Panc1 (cell line): ENCODE measurements at regions of chr3 and their contacts with region 1.

Region 1: DNA sequence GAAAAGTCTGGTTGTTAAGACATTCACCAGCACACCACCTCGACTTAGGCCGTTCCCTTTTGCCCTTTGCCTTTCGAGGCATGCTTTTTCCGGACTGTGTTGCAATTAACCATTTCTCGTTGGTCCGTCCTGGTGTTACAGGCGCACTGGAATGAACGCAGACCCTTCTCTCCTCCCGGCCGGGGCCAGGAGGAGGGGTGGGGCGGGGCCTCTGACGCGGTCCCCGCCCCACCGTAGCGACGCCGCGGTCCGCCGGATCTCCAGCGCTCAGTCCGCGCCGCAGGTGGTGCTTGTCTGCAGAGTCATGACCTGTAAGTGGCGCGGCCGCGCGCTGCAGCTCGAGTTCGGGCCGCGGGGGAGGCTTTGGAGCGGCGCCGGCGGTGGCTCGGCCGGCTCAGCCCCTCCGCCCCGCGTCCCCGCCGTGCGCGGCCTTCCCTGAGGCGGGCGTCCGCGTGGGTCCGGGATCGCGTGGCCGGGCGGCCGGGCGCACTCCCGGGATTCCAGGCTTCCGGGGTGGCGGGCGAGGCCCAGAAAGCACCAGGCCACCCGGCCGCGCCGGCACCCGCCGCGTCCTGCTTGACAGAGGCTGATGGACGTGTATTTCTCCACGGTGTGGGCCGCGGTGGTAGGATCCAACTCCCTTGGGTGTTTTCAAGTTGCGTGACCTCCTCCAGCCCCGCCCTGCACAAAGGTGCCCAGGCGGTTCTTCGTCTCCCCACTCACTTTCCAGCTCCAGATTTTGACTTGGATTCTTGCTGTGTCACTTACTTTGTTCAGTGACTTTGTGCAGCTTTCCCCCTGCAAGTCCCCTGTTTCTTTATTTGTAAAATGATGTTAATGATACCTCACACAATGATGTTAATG is at the start of gene NIT2:
- DNase-seq: peak; percentile 47
- ATAC-seq: peak; percentile 99
- H3K4me3 ChIP-seq: peak within 1 kb of the TSS; percentile 70 to 78
- H3K27ac ChIP-seq: peak within 1 kb of the TSS; percentile 94
- H3K4me1 ChIP-seq: peaks cover 10% of the 10 kb centered on the region
- H3K27me3 ChIP-seq: no peaks in the 10 kb centered on the region
- CTCF ChIP-seq: no peak
- total RNA-seq, gene NIT2: 97.2 TPM

Region 2: DNA sequence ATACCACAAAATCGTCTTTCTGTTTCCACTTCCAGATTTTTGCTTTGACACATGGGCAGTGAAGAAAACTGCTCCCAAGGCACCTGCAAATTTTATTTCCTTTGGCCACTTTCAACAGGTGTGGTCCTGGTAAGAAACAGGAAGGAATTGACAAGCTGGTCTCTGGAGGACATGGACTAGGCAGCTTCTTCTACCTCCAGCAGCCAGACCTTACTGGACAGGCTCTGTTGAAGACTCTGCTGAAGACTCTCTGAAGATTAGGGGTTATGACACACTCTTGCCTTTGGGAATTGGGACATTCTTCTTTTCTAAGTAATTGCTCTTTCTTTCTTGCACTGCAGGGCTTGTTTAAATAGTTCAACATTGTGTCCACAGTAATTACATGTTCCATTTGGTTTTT is 1285.6 kb before region 1 on chr3:
- CTCF ChIA-PET with region 1: no interaction called
- POLR2A ChIA-PET with region 1: no interaction called
- in situ Hi-C with region 1: no loop called
- intact Hi-C with region 1: no loop called
- DNase-seq: no peak
- ATAC-seq: no peak
- H3K4me3 ChIP-seq: no peak overlapping the region
- H3K27ac ChIP-seq: no peak overlapping the region
- H3K4me1 ChIP-seq: no peaks in the 10 kb centered on the region
- H3K27me3 ChIP-seq: no peaks in the 10 kb centered on the region
- CTCF ChIP-seq: no peak

Region 3: DNA sequence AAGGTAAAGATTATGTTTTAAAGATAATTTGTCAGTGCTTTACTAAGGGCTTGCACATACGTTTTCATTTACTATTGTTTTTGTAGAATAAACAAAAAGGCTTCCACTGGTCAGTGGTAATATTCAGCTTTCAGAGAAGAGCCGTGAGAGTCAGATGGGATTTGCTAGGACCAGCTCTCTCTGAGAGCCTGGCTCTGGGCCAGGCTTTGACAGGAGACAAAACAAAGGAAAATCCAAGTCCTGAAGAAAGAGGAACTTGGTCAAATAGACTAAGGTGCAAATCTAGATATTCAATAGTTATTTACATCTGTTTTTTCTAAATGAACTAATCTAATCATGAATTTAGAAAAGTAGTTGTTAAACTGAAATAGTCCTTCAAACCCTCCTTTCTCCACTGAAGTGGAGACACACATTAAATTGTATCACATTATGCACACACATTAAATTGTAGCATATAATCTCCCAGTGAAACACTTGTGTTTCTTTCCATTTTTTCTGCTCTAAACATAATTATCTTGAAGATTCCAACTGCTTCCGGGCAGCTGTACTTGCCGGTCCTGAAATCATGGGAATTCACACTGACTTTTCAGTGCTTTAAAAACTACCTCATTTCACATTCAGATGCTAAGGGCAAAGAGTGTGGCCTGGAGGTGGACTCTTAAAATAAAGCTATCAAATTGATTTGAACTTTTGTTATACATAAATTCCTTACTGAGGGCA is 165.4 kb before region 1 on chr3:
- CTCF ChIA-PET with region 1: no interaction called
- POLR2A ChIA-PET with region 1: no interaction called
- in situ Hi-C with region 1: no loop called
- intact Hi-C with region 1: no loop called
- DNase-seq: no peak
- ATAC-seq: no peak
- H3K4me3 ChIP-seq: no peak overlapping the region
- H3K27ac ChIP-seq: no peak overlapping the region
- H3K4me1 ChIP-seq: no peaks in the 10 kb centered on the region
- H3K27me3 ChIP-seq: no peaks in the 10 kb centered on the region
- CTCF ChIP-seq: no peak

Region 4: GRCh38 chr3:100269410-100270217 is 65.1 kb before region 1 on chr3:
- CTCF ChIA-PET with region 1: no interaction called
- POLR2A ChIA-PET with region 1: no interaction called
- in situ Hi-C with region 1: no loop called
- intact Hi-C with region 1: loop called (anchors 10 kb)
- DNase-seq: peak; percentile 70
- ATAC-seq: peak; percentile 83
- H3K4me3 ChIP-seq: no peak overlapping the region
- H3K27ac ChIP-seq: no peak overlapping the region
- H3K4me1 ChIP-seq: no peaks in the 10 kb centered on the region
- H3K27me3 ChIP-seq: no peaks in the 10 kb centered on the region
- CTCF ChIP-seq: no peak